ENCODE measurements at regions of chr14 and their contacts with region 1.

Region 1: GRCh38 chr14:74905375-74906142 is 17.5 kb downstream of the RPS6KL1 start:
- DNase-seq: peak; percentile 87
- H3K4me3 ChIP-seq: no peak overlapping the region
- H3K27ac ChIP-seq: peak overlapping the region in 3 of 4 donors; percentile 15 to 44 (median 27)
- H3K4me1 ChIP-seq: peaks cover 0 to 26% (median 22%) of the 10 kb centered on the region in 4 donors
- H3K27me3 ChIP-seq: no peaks in the 10 kb centered on the region
- CTCF ChIP-seq: peak; percentile 84 to 89 (median 87)
- EP300 ChIP-seq: no peak
- POLR2A ChIP-seq: no peak

Region 2: DNA sequence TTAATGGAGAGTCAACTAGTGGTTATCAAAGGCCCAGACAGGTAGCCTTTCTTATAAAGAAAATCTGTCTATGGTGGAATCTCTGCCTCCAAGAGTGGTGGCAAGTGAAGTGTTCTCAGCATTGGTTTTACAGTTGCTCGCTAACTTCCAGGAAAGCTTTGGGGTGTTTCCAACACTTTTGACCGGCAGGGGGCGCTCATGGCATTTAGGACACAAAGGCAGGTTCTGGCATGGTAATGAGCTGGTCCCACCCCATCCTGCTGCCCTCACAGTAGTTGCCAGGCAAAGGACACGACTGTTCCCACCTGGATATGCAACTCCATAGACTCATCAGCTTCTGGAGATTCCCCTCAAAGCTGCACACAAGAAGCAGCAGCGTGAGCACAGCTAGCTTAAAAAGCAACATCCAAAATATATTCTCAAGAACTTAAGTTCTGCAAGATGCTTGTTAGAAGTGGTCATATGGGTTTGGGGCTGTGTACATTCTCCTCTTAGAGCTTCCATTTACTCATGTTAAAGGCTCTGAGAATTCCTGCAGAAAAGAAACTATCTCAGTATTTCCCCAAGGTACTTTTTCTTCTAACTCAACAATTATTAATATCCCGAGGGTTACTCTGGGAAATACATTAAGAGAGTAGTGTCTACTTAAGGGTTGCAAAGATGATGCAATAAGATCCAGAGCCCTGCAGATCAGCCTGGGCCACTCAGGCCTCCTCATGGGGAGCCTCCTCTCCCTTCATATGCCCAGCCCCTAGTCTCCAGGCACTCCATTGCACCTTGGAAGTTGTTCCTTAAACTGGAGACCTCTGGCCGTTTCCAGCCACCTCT is 44.4 kb before region 1 on chr14:
- intact Hi-C with region 1: loop called (anchors 1 kb)
- DNase-seq: peak; percentile 92
- H3K4me3 ChIP-seq: no peak overlapping the region
- H3K27ac ChIP-seq: no peak overlapping the region
- H3K4me1 ChIP-seq: peaks cover 0 to 10% (median 7%) of the 10 kb centered on the region in 4 donors
- H3K27me3 ChIP-seq: no peaks in the 10 kb centered on the region
- CTCF ChIP-seq: peak; percentile 58 to 89 (median 74)
- EP300 ChIP-seq: no peak
- POLR2A ChIP-seq: no peak